Activated CD8-positive, alpha-beta T cell treated with anti-CD3 and anti-CD28 coated beads, Interleukin-2, amount 10 ng/mL, durations not matched to agents 7 days and 5 days (primary cell): ENCODE measurements at regions of chr3 and their contacts with region 1.

Region 1: GRCh38 chr3:122305818-122306621 is 19.0 kb upstream of the CSTA start:
- DNase-seq: no peak
- ATAC-seq: no peak
- H3K4me3 Mint-ChIP-seq: no peak overlapping the region
- H3K27ac Mint-ChIP-seq: no peak overlapping the region
- H3K4me1 Mint-ChIP-seq: peaks cover 3% of the 10 kb centered on the region
- H3K27me3 Mint-ChIP-seq: peaks cover 16% of the 10 kb centered on the region

Region 2: DNA sequence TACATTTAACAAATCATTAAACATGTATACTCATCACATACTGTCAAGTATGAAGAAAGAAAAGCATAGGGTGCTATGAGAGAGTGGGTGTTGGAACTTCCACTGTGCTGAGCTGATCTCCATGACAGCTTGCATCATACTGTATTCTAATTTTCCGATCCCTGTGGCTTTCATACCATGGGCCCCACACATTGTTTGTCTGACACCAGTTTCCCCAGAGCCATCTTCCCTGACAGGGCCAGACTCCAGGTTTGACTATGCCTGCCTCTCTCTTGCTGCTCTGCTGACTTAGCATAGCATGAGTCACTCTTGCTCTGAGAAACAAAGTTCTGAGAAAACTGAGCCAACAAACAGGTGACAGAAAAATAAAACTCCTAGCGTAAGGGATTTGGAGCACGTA is 159.6 kb before region 1 on chr3:
- CTCF ChIA-PET with region 1: no interaction called
- POLR2A ChIA-PET with region 1: no interaction called
- DNase-seq: peak; percentile 31
- ATAC-seq: peak; percentile 77
- H3K4me3 Mint-ChIP-seq: no peak overlapping the region
- H3K27ac Mint-ChIP-seq: peak overlapping the region; percentile 51
- H3K4me1 Mint-ChIP-seq: peaks cover 7% of the 10 kb centered on the region
- H3K27me3 Mint-ChIP-seq: no peaks in the 10 kb centered on the region

Region 3: GRCh38 chr3:122200661-122201060 is 105.4 kb before region 1 on chr3:
- CTCF ChIA-PET with region 1: no interaction called
- POLR2A ChIA-PET with region 1: no interaction called
- DNase-seq: no peak
- ATAC-seq: no peak
- H3K4me3 Mint-ChIP-seq: no peak overlapping the region
- H3K27ac Mint-ChIP-seq: no peak overlapping the region
- H3K4me1 Mint-ChIP-seq: peaks cover 6% of the 10 kb centered on the region
- H3K27me3 Mint-ChIP-seq: peaks cover 14% of the 10 kb centered on the region

Region 4: DNA sequence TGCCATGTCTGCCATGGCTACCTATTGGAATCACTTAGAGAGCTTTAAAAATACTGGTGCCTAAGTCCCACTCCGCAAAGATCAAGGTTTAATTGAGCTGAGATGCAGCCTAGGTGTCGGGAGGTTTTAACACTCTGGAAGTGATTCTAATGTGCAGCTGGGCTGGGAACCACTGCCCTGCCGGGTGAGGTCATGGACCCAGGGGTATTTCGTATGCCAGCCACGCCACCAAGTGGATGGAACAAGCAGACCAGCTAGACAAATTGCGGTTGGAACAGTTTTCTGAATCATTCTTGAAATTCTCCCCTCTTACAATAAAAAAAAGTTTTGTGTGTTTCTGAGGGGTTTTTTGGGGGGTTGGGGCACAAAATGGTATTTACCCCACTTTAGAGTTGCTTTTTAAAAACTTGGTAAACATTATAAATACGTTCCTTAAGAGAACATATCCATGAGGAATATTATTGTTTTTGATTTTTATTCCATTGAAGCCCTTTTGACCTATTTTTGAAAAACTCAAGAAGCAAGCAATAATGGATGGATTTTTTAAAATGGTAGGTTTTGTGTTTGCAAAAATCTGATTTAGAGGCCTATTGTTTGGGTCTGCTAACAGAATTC is 47.2 kb before region 1 on chr3:
- CTCF ChIA-PET with region 1: interaction called, 11 read pairs
- POLR2A ChIA-PET with region 1: no interaction called
- DNase-seq: peak; percentile 63
- ATAC-seq: peak; percentile 90
- H3K4me3 Mint-ChIP-seq: no peak overlapping the region
- H3K27ac Mint-ChIP-seq: no peak overlapping the region
- H3K4me1 Mint-ChIP-seq: peaks cover 6% of the 10 kb centered on the region
- H3K27me3 Mint-ChIP-seq: peaks cover 23% of the 10 kb centered on the region

Region 5: GRCh38 chr3:122281891-122282290 is 24.1 kb before region 1 on chr3:
- CTCF ChIA-PET with region 1: no interaction called
- POLR2A ChIA-PET with region 1: no interaction called
- DNase-seq: no peak
- ATAC-seq: no peak
- H3K4me3 Mint-ChIP-seq: no peak overlapping the region
- H3K27ac Mint-ChIP-seq: no peak overlapping the region
- H3K4me1 Mint-ChIP-seq: no peaks in the 10 kb centered on the region
- H3K27me3 Mint-ChIP-seq: peaks cover 16% of the 10 kb centered on the region

Region 6: DNA sequence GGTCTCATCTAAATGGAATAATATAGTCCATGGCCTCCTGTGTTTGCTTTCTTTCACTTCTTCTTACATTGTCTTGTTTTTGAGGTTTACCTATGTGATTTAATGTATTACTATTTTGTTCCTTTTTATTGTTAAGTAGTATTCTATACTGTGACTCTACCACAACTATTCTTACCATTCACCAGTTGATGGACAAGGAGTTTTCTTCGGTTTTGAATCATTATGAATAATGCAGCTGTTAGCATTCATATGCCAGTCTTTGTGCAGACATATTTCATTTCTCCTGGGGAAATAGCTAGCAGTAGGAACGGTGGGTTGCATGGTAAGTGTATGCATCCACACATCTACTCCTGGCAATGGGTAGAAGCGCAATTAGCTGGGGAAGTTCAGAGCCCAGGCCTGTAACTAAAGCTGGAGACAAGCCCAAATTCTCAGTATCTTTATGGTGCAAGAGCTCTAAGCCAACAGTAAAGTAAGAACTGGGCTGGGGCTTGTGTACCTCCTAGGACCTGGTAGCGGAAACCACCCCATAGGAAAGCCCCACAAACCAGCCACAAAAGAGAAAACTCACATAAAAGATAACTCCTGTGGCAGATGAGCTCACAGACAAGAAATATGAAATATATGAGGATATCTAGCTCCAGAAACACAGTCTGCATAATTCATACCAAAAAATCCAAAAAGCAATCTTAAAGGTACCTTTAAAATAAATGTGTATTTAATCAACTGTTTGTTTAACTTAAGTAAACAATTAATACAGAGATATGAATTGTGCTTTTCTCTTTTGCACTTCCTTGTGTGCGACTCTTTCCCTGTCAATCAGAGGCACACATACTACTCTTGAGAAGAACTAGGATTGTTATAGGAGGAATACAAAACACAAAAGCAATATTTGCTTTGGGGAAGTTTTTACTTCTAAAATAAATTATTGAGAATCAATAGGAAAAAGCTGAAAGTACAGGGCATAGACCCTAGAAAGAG is 16.4 kb after region 1 on chr3:
- CTCF ChIA-PET with region 1: interaction called, 16 read pairs
- POLR2A ChIA-PET with region 1: no interaction called
- DNase-seq: peak; percentile 64
- ATAC-seq: peak; percentile 97
- H3K4me3 Mint-ChIP-seq: no peak overlapping the region
- H3K27ac Mint-ChIP-seq: peak overlapping the region; percentile 41
- H3K4me1 Mint-ChIP-seq: peaks cover 34% of the 10 kb centered on the region
- H3K27me3 Mint-ChIP-seq: peaks cover 10% of the 10 kb centered on the region

Region 7: GRCh38 chr3:122356415-122356814 is 50.4 kb after region 1 on chr3:
- CTCF ChIA-PET with region 1: interaction called, 24 read pairs
- POLR2A ChIA-PET with region 1: no interaction called
- DNase-seq: peak; percentile 50
- ATAC-seq: no peak
- H3K4me3 Mint-ChIP-seq: no peak overlapping the region
- H3K27ac Mint-ChIP-seq: no peak overlapping the region
- H3K4me1 Mint-ChIP-seq: peaks cover 9% of the 10 kb centered on the region
- H3K27me3 Mint-ChIP-seq: no peaks in the 10 kb centered on the region

Region 8: GRCh38 chr3:122383771-122384697 is 78.0 kb after region 1 on chr3 and contains the start of gene FAM162A:
- CTCF ChIA-PET with region 1: interaction called, 19 read pairs
- POLR2A ChIA-PET with region 1: interaction called, 3 read pairs
- DNase-seq: peak; percentile 96
- ATAC-seq: peak; percentile 98
- H3K4me3 Mint-ChIP-seq: peak within 1 kb of the TSS; percentile 90
- H3K27ac Mint-ChIP-seq: peak within 1 kb of the TSS; percentile 91
- H3K4me1 Mint-ChIP-seq: peaks cover 58% of the 10 kb centered on the region
- H3K27me3 Mint-ChIP-seq: no peaks in the 10 kb centered on the region
- total RNA-seq, gene FAM162A: 78.0 to 78.4 TPM